Colonic mucosa (tissue), 4 donors: ENCODE measurements at regions of chr15 and their contacts with region 1.

Region 1: GRCh38 chr15:77496710-77497103 is 76.0 kb downstream of the HMG20A start:
- DNase-seq: peak; percentile 81
- H3K4me3 ChIP-seq: no peak overlapping the region
- H3K27ac ChIP-seq: no peak overlapping the region
- H3K4me1 ChIP-seq: no peaks in the 10 kb centered on the region
- H3K27me3 ChIP-seq: no peaks in the 10 kb centered on the region
- CTCF ChIP-seq: peak; percentile 90

Region 2: DNA sequence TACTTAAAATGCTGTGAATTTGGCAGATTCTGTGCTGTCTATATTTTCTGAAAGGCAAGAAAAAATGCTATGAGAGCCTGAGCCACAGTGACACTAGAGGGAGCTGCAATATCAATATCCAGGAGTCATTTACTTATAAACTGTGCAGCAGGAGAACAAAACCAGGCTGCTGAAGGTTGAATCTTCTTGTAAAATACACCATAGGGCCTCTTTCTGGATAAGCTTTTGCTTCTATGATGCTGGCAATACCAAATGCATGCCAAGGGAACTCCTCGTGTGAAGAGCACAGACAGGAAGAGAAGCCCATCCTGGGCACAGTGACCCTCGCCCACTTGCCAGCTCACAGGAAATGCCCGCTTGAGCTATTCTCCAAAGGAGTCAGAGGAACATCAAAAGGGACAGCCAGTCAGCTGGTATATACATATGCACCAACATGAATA is 377.8 kb before region 1 on chr15:
- intact Hi-C with region 1: loop called (anchors 5 kb)
- DNase-seq: peak; percentile 49
- H3K4me3 ChIP-seq: no peak overlapping the region
- H3K27ac ChIP-seq: no peak overlapping the region
- H3K4me1 ChIP-seq: no peaks in the 10 kb centered on the region
- H3K27me3 ChIP-seq: no peaks in the 10 kb centered on the region
- CTCF ChIP-seq: peak; percentile 60

Region 3: GRCh38 chr15:77186594-77187011 is 310.1 kb before region 1 on chr15:
- intact Hi-C with region 1: loop called (anchors 10 kb)
- DNase-seq: no peak
- H3K4me3 ChIP-seq: no peak overlapping the region
- H3K27ac ChIP-seq: peak overlapping the region; percentile 9
- H3K4me1 ChIP-seq: no peaks in the 10 kb centered on the region
- H3K27me3 ChIP-seq: no peaks in the 10 kb centered on the region
- CTCF ChIP-seq: peak; percentile 42

Region 4: DNA sequence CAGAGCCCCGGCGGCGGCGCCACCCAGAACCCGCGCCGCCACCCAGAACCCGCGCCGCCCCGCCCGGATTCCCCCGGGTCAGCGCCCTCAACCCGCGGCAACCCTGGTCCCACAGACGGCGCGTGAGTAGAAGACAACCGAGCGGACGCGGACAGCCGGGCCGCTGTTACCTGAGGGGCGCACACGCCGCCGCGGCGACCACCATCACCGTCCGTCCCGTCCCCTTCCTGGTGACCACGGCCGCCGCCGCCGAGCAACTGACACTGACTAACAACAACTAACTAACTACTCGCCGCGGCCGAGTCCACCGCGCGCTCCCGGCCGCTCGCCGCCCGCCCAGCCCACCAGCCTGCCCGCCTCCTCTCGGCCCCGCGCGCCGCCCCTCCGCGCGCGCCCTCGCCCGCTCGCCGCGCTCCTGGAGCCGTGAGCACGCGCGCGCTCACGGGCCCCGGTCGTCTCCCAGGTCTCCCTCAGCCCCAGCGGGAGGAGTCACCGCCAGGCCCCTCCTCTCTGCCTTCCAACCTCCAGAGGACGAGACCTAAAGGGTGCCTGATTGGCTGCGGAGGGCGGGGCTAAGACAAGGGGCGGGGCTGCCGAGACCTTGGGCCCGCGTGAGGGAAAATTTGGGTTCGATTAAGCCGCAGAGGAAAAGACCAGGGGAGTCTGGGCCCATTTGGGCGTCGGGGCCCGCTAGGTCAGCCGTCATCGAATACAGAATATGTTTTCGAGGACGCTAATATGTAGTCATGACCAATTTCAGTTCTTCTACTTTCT is 76.7 kb before region 1 on chr15 and contains the start of gene PEAK1:
- intact Hi-C with region 1: loop called (anchors 10 kb)
- DNase-seq: peak; percentile 100
- H3K4me3 ChIP-seq: peak within 1 kb of the TSS; percentile 88
- H3K27ac ChIP-seq: peak within 1 kb of the TSS; percentile 91
- H3K4me1 ChIP-seq: no peaks in the 10 kb centered on the region
- H3K27me3 ChIP-seq: no peaks in the 10 kb centered on the region
- CTCF ChIP-seq: no peak
- total RNA-seq, gene PEAK1: 33.5 to 54.4 TPM

Region 5: GRCh38 chr15:77676569-77677375 is 180.1 kb after region 1 on chr15:
- intact Hi-C with region 1: no loop called
- DNase-seq: no peak
- H3K4me3 ChIP-seq: no peak overlapping the region
- H3K27ac ChIP-seq: no peak overlapping the region
- H3K4me1 ChIP-seq: no peaks in the 10 kb centered on the region
- H3K27me3 ChIP-seq: no peaks in the 10 kb centered on the region
- CTCF ChIP-seq: no peak